ENCODE measurements at regions of chr2 and their contacts with region 1.

Region 1: GRCh38 chr2:11863513-11864328 is 117.3 kb downstream of the LPIN1 start:
- DNase-seq: peak; percentile 86
- ATAC-seq: peak; percentile 96
- H3K4me3 ChIP-seq: no peak overlapping the region
- H3K27ac ChIP-seq: no peak overlapping the region
- H3K4me1 ChIP-seq: peaks cover 15% of the 10 kb centered on the region; the same call in 1 of the 2 replicates
- H3K27me3 ChIP-seq: peaks cover 0 to 20% of the 10 kb centered on the region in 2 experiments; a peak in 2 of 5 replicates
- CTCF ChIP-seq: peak; percentile 97
- EP300 ChIP-seq: no peak
- POLR2A ChIP-seq: no peak
- RAD21 ChIP-seq: peak; percentile 77

Region 2: DNA sequence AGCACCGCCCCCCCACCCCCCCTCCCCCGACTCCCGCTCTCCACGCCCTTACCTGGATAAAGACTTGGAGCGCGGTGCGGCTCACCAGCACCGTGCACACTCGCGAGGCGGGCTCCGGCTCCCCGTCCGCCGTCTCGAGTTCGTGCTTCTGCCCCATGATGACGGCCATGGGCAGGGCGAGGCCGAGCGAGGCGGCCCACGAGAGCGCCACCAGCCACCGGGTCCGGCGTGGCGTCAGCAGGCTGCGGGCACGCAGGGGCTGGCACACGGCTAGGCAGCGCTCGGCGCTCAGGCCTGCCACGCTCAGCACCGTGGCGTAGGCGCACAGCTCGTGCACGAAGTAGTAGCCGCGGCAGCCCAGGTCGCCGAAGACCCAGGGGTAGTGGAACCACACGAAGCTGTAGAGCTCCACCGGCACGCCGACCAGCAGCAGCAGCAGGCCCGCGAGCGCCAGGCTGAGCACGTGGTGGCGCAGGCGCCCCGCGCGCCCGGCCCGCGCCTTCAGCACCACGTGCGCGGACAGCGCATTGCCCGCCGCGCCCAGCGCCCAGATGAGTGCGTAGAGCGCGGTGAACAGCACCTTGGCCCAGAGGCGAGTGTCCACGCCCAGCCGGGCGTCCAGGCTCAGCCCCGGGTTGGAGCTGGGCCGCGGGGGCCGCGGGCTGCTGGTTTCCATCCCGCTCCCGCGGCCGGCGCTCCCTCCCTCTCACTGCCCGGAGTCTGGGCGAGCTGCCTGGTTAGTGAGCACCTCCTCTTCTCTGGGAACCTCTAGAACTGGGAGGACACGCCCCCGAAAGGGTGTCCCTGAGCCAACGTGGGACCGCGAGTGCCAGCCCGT is 194.0 kb before region 1 on chr2 and contains the start of gene NTSR2:
- CTCF ChIA-PET with region 1: no interaction called
- POLR2A ChIA-PET with region 1: no interaction called
- in situ Hi-C with region 1: no loop called
- intact Hi-C with region 1: no loop called
- DNase-seq: peak; percentile 51
- ATAC-seq: peak; percentile 97
- H3K4me3 ChIP-seq: no peak within 1 kb of the TSS; a peak in 1 of 6 replicates
- H3K27ac ChIP-seq: no peak within 1 kb of the TSS
- H3K4me1 ChIP-seq: peaks cover 9% of the 10 kb centered on the region; the same call in 1 of the 2 replicates
- H3K27me3 ChIP-seq: peaks cover 8 to 59% of the 10 kb centered on the region in 2 experiments; a peak in 4 of 5 replicates
- CTCF ChIP-seq: peak; percentile 61
- EP300 ChIP-seq: 0 out of 4 replicates have a peak, but pooled peaks of 1 of the 2 experiments have one; percentile 10
- POLR2A ChIP-seq: no peak
- RAD21 ChIP-seq: peak; percentile 80
- total RNA-seq, gene NTSR2: not detected in 2 replicates

Region 3: GRCh38 chr2:11950894-11951293 is 87.2 kb after region 1 on chr2:
- CTCF ChIA-PET with region 1: interaction called, 5 read pairs
- POLR2A ChIA-PET with region 1: no interaction called
- in situ Hi-C with region 1: no loop called
- intact Hi-C with region 1: loop called (anchors 1 kb)
- DNase-seq: no peak
- ATAC-seq: no peak
- H3K4me3 ChIP-seq: no peak overlapping the region
- H3K27ac ChIP-seq: no peak overlapping the region
- H3K4me1 ChIP-seq: no peaks in the 10 kb centered on the region
- H3K27me3 ChIP-seq: no peaks in the 10 kb centered on the region
- CTCF ChIP-seq: no peak
- EP300 ChIP-seq: no peak
- POLR2A ChIP-seq: no peak
- RAD21 ChIP-seq: no peak

Region 4: DNA sequence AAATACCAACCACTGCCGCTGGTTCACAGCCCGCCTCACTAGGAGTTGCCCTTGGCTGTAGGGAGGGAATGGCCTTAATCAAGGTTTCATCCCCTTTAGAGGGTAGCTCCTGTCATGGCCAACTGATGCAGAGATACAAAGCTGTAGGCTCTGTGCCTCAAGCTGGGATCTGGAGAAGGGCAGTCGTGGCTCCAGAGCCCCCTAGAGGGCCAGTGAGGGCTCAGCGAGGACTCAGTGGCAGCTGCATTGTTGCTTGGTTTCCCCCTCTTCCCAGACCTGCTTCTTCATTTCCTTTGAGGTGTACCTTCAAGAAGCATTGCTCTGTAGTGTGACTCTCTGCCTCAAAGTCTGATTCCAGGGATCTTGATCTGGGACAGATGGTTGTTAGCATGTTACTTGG is 184.8 kb after region 1 on chr2:
- CTCF ChIA-PET with region 1: no interaction called
- POLR2A ChIA-PET with region 1: no interaction called
- in situ Hi-C with region 1: no loop called
- intact Hi-C with region 1: loop called (anchors 1 kb)
- DNase-seq: no peak
- ATAC-seq: peak; percentile 84
- H3K4me3 ChIP-seq: no peak overlapping the region
- H3K27ac ChIP-seq: no peak overlapping the region
- H3K4me1 ChIP-seq: no peaks in the 10 kb centered on the region
- H3K27me3 ChIP-seq: peaks cover 2 to 6% of the 10 kb centered on the region in 2 experiments; a peak in 2 of 5 replicates
- CTCF ChIP-seq: peak; percentile 41
- EP300 ChIP-seq: no peak
- POLR2A ChIP-seq: no peak
- RAD21 ChIP-seq: no peak

Region 5: GRCh38 chr2:12326449-12327190 is 462.9 kb after region 1 on chr2:
- CTCF ChIA-PET with region 1: no interaction called
- POLR2A ChIA-PET with region 1: no interaction called
- in situ Hi-C with region 1: no loop called
- intact Hi-C with region 1: loop called (anchors 1 kb)
- DNase-seq: peak; percentile 34
- ATAC-seq: peak; percentile 99
- H3K4me3 ChIP-seq: no peak overlapping the region
- H3K27ac ChIP-seq: no peak overlapping the region
- H3K4me1 ChIP-seq: no peaks in the 10 kb centered on the region
- H3K27me3 ChIP-seq: no peaks in the 10 kb centered on the region; a peak in 1 of 5 replicates
- CTCF ChIP-seq: peak; percentile 69
- EP300 ChIP-seq: no peak
- POLR2A ChIP-seq: no peak
- RAD21 ChIP-seq: 0 out of 2 replicates have a peak, but pooled peaks have one; percentile 19

Measured in HepG2 (cell line).